Activated CD4-positive, alpha-beta memory T cell treated with anti-CD3 and anti-CD28 coated beads for 36 hours (primary cell): ENCODE measurements at regions of chr5 and their contacts with region 1.

Region 1: DNA sequence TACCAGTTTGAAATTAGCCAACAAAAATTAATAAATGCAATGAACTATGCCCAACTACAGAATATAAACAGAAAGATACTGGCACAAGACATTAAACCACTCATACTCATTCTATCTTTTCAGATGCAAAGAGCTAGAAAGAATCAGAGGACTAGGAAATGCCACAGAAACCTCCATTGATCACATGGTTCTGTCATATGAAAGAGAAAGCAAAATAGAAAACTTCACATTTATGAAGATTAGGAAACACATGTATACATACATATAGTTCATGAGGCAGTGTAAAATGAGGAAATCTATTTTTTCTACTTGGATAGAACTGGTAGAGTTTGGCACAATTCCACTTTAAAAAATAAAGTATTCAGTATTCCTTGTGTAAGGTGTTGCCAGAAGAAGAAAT is 275.1 kb upstream of the PTGER4 start:
- DNase-seq: no peak
- H3K4me3 Mint-ChIP-seq: no peak overlapping the region
- H3K27ac Mint-ChIP-seq: peak overlapping the region; percentile 99
- H3K4me1 Mint-ChIP-seq: peaks cover 90% of the 10 kb centered on the region
- H3K27me3 Mint-ChIP-seq: no peaks in the 10 kb centered on the region

Region 2: DNA sequence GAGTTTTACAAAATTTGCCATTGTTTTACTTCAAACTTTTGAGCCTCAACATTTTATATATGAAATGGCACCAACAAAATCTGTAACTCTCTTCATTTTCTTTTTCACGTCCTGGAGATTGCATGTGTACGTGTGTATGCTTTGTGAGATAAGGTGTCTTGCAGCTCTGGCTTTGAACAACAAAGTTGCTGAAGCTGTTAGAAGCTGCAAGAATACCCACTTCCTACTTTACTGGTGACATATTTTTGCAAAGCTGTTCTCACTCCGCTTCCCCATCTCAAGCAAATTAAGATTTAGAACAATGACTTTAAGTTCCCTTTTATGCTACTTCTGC is 1227.0 kb before region 1 on chr5:
- CTCF ChIA-PET with region 1: no interaction called
- POLR2A ChIA-PET with region 1: no interaction called
- intact Hi-C with region 1: loop called (anchors 10 kb)
- DNase-seq: no peak
- H3K4me3 Mint-ChIP-seq: peak overlapping the region; percentile 63
- H3K27ac Mint-ChIP-seq: peak overlapping the region; percentile 88
- H3K4me1 Mint-ChIP-seq: peaks cover 97% of the 10 kb centered on the region
- H3K27me3 Mint-ChIP-seq: no peaks in the 10 kb centered on the region

Region 3: GRCh38 chr5:40210694-40211093 is 193.9 kb before region 1 on chr5:
- CTCF ChIA-PET with region 1: no interaction called
- POLR2A ChIA-PET with region 1: no interaction called
- intact Hi-C with region 1: loop called (anchors 1 kb)
- DNase-seq: no peak
- H3K4me3 Mint-ChIP-seq: no peak overlapping the region
- H3K27ac Mint-ChIP-seq: peak overlapping the region; percentile 94
- H3K4me1 Mint-ChIP-seq: peaks cover 65% of the 10 kb centered on the region
- H3K27me3 Mint-ChIP-seq: no peaks in the 10 kb centered on the region

Region 4: DNA sequence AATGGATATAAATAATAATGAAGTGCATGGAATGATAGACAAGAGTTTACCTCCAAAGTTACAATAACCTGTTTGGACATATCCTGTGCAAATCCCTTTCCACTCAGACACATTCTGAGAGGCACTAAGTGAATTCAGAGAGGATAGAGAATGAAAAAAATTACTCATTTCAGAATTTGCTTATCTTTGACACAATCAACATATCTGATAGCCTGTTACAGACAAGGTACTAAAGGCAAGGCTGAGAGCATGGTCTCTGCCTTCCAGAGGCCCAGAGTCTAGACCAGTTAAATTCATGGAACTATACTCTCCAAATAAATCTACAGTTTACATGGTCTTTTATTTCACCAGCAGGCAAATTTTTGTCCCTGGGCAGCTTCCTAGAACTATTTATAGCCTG is 96.7 kb before region 1 on chr5:
- CTCF ChIA-PET with region 1: no interaction called
- POLR2A ChIA-PET with region 1: no interaction called
- intact Hi-C with region 1: no loop called
- DNase-seq: no peak
- H3K4me3 Mint-ChIP-seq: no peak overlapping the region
- H3K27ac Mint-ChIP-seq: no peak overlapping the region
- H3K4me1 Mint-ChIP-seq: peaks cover 9% of the 10 kb centered on the region
- H3K27me3 Mint-ChIP-seq: no peaks in the 10 kb centered on the region

Region 5: GRCh38 chr5:40333459-40334244 is 71.0 kb before region 1 on chr5:
- CTCF ChIA-PET with region 1: interaction called, 3 read pairs
- POLR2A ChIA-PET with region 1: interaction called, 12 read pairs
- intact Hi-C with region 1: loop called (anchors 1 kb)
- DNase-seq: peak; percentile 56
- H3K4me3 Mint-ChIP-seq: no peak overlapping the region
- H3K27ac Mint-ChIP-seq: peak overlapping the region; percentile 33
- H3K4me1 Mint-ChIP-seq: peaks cover 50% of the 10 kb centered on the region
- H3K27me3 Mint-ChIP-seq: no peaks in the 10 kb centered on the region

Region 6: DNA sequence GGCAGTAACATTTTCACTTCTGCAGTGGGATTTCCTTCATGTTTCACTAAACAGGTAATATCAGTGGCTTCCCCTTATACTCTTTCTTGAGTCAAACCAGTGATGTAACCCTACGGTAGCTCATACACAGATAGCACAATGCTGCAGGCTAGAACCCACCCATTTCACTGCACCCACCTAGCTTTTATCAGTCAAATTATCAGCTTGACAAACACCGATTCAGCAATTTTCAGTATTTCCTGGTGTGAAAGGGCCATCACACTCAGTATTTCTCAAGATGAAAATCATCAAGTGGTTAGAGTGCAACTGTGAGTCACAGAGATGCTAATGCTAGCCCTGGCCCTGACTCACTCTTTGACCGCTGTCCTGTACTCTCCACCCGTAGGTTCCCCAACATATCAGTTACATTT is 32.8 kb after region 1 on chr5:
- CTCF ChIA-PET with region 1: interaction called, 12 read pairs
- POLR2A ChIA-PET with region 1: interaction called, 27 read pairs
- intact Hi-C with region 1: loop called (anchors 1 kb)
- DNase-seq: peak; percentile 58
- H3K4me3 Mint-ChIP-seq: no peak overlapping the region
- H3K27ac Mint-ChIP-seq: peak overlapping the region; percentile 70
- H3K4me1 Mint-ChIP-seq: peaks cover 74% of the 10 kb centered on the region
- H3K27me3 Mint-ChIP-seq: no peaks in the 10 kb centered on the region

Region 7: DNA sequence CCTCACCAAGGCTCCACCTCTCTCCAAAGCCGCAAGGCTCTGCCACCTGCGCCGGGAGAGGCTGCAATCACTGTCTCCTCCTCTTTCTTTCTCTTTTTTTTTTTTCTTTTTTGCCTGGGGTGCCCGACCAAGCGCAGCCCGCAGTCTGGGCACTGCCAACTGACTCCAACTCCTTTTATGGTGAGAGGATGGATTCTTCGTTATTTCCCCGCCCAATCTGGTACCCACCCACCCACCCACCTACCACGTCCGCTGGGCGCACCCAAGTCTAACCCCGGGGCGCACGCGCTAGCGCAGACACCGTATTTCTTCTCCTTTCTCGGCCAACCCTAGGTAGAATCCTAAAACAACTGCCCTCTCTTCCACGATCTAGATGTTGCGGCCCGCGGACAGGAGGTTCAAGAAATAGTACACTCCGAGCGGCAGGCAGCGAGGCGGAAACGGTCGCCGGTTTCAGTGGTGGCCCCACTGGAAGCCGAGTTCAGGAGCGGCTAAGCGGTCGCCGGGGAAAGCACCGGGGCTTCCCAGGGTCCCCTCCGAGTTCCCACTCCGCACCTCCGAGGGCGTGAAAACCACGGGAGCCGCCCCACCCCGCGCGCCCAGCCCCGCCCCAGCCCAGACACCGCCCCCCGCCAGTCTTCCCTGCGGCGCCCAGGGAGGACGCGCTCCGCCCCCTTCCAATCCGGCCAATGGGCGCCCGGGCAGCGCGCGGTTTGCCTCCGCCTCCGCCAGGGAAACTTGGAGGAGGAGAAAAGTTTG is 274.7 kb after region 1 on chr5:
- CTCF ChIA-PET with region 1: interaction called, 3 read pairs
- POLR2A ChIA-PET with region 1: interaction called, 26 read pairs
- intact Hi-C with region 1: no loop called
- DNase-seq: peak; percentile 96
- H3K4me3 Mint-ChIP-seq: peak overlapping the region; percentile 93
- H3K27ac Mint-ChIP-seq: peak overlapping the region; percentile 97
- H3K4me1 Mint-ChIP-seq: peaks cover 37% of the 10 kb centered on the region
- H3K27me3 Mint-ChIP-seq: no peaks in the 10 kb centered on the region

Region 8: GRCh38 chr5:40755407-40756365 is 351.1 kb after region 1 on chr5 and contains the start of gene TTC33:
- CTCF ChIA-PET with region 1: no interaction called
- POLR2A ChIA-PET with region 1: no interaction called
- intact Hi-C with region 1: loop called (anchors 5 kb)
- DNase-seq: peak; percentile 98
- H3K4me3 Mint-ChIP-seq: peak within 1 kb of the TSS; percentile 21
- H3K27ac Mint-ChIP-seq: no peak within 1 kb of the TSS
- H3K4me1 Mint-ChIP-seq: peaks cover 17% of the 10 kb centered on the region
- H3K27me3 Mint-ChIP-seq: no peaks in the 10 kb centered on the region
- total RNA-seq, gene TTC33: 30.2 to 34.1 TPM